Left cardiac atrium (tissue), 4 donors: ENCODE measurements at regions of chr9 and their contacts with region 1.

Region 1: GRCh38 chr9:16191691-16192402 is 639.0 kb downstream of the CCDC171 start:
- DNase-seq: peak; percentile 86
- ATAC-seq: peak; percentile 90 to 95

Region 2: DNA sequence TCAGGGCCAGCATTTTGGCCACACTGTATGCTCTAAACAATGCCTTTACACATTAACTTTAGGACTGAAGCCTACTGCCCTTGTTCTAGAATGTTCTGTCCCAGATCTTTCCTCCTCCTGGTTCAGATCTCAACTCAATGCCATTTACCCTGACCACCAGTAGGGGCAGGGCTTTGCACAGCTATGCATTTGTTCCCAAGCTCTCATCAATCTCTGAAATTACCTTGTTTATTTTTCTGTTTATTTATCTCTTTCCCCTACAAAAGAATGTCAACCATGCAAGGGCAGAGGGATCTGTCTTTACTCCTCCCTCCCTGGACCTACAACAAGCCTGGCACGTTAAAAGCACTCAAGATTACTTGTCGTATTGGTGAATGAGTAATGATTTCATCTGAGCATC is 65.8 kb after region 1 on chr9:
- intact Hi-C with region 1: loop called in 1 of 2 experiments (anchors 10 kb)
- DNase-seq: no peak
- ATAC-seq: peak in 1 of 2 donors; percentile 42

Region 3: GRCh38 chr9:16417161-16417560 is 225.3 kb after region 1 on chr9:
- intact Hi-C with region 1: loop called in 1 of 2 experiments (anchors 10 kb)
- DNase-seq: no peak
- ATAC-seq: peak in 1 of 2 donors; percentile 44